ENCODE measurements at regions of chr2 and their contacts with region 1.

Region 1: DNA sequence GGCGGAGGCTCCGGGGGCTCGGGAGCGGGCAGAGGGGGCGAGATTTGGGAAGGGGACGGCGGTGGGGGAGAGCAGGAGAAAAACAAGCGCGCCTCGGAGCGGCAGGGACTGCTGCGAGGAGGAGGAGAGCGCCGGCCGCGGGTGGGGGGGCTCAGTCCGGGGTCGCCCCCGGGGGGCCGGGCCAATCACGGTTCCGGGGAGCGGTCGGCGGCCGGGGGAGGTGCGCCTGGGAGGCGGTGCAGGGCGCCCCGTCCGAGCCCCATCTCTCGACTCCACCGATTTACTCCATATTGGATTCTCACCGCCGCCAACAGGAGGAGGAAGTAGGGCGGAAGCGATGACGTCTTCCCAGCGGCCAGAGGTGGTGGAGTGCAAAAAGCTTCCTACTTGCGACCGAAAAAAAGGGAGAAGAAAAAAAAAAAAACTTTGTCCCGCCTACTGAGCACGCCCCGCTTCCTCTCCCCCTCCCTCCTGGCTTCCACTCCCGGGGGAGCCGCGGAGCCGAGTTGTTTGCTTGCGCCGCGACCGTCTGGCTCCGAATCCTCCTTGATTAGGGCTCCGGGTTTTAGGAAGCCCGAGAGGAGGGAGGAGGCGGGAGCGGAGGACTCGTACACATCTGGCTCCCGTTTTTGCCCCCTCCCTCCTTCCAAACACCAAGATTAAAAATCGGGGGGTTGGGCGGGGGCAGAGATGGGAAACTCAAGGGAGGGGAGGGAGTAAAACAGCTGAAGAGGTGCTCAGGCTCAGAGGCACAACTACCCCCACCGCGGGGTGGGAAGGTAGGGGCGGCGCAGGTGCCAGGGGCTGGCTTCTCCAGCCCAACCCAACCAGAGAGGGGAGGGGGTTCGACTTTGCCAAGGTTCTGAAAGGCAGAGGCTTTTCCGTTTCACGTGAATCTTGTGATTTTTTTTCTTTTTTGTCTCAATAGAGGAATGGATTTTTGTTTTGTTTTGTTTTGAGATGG is at the start of gene SPRED2:
- DNase-seq: peak; percentile 87
- ATAC-seq: peak; percentile 50
- H3K4me3 Mint-ChIP-seq: peak within 1 kb of the TSS; percentile 85
- H3K27ac Mint-ChIP-seq: peak within 1 kb of the TSS; percentile 73
- H3K4me1 Mint-ChIP-seq: peaks cover 16% of the 10 kb centered on the region
- H3K27me3 Mint-ChIP-seq: peaks cover 23% of the 10 kb centered on the region
- total RNA-seq, gene SPRED2: 6.7 to 7.9 TPM

Region 2: DNA sequence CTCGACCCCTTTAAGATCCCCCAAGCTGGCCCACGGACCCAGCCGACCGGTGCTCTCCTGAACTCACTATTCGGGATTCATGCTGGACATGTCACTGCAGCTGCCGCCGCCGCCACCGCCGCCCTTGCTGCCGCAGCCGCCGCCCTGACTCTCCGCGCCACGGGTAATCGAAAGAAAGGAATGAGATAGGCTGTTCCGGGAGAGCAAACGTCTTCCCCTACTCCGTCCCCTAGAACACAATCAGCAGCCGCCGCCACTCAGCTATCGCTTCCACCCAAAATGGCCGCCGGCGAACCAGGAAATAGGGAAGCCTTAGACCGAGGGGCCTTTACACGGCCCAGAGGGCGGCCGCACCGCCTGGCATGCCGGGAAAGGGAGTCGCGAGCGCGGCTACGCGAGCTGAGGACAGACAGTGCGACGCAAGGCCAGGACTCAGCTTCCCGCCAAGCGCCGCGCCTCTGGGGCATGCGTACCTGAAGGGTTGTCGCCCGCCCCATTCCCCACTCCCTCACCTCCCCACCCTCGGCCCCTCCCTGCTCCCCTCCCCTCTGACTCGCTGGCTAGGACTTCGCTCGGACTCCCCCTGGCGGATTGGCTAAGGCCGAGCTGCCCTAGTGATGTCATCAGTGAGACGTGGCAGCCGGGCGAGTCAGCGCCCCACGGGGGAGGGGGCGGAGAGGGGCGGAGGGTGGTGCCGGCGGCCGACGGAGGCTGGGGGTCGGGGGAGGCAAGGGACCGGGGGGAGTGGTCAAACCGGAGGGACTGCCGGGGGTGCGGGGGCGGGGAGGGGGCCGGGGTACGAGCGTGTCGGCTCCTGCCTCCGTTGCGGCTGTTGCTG is 302.5 kb before region 1 on chr2 and contains the start of gene RAB1A:
- CTCF ChIA-PET with region 1: no interaction called
- POLR2A ChIA-PET with region 1: interaction called, 3 read pairs
- intact Hi-C with region 1: loop called in 1 of 2 experiments (anchors 1 kb)
- DNase-seq: peak; percentile 100
- ATAC-seq: peak; percentile 95
- H3K4me3 Mint-ChIP-seq: peak within 1 kb of the TSS; percentile 100
- H3K27ac Mint-ChIP-seq: peak within 1 kb of the TSS; percentile 100
- H3K4me1 Mint-ChIP-seq: peaks cover 30% of the 10 kb centered on the region
- H3K27me3 Mint-ChIP-seq: no peaks in the 10 kb centered on the region
- total RNA-seq, gene RAB1A: 77.1 to 84.8 TPM

Region 3: GRCh38 chr2:65300761-65301711 is 131.5 kb before region 1 on chr2:
- CTCF ChIA-PET with region 1: interaction called, 4 read pairs
- POLR2A ChIA-PET with region 1: interaction called, 4 read pairs
- intact Hi-C with region 1: loop called (anchors 1 kb)
- DNase-seq: peak; percentile 90
- ATAC-seq: peak; percentile 92
- H3K4me3 Mint-ChIP-seq: peak overlapping the region; percentile 52
- H3K27ac Mint-ChIP-seq: peak overlapping the region; percentile 79
- H3K4me1 Mint-ChIP-seq: peaks cover 48% of the 10 kb centered on the region
- H3K27me3 Mint-ChIP-seq: peaks cover 13% of the 10 kb centered on the region

Region 4: DNA sequence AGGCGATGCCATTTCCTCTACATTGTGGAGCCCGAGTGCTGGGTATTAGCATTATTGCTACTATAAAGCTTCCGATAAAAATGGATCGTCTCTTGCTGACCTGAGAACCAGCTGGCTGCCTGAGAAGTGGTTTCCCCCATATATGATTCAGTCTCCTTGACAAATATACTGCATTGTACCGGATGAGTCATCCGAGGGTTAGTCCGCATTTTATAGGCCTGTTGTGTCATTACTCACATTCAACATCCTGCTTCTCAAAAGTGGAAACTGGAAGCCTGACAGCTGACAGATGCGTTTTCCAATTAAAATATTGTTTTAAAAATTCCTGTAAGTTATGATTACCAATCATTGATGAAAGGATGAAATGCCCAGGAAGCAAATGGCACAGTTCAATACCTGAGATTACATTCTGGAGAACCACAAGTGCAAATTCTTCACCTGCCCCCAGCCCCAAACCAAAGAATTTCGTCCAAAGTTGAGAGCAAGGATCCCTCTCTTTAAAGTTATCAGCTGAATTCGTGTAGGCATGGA is 65.8 kb before region 1 on chr2:
- CTCF ChIA-PET with region 1: interaction called, 3 read pairs
- POLR2A ChIA-PET with region 1: no interaction called
- intact Hi-C with region 1: loop called in 1 of 2 experiments (anchors 5 kb)
- DNase-seq: peak; percentile 63
- ATAC-seq: peak; percentile 97
- H3K4me3 Mint-ChIP-seq: no peak overlapping the region
- H3K27ac Mint-ChIP-seq: no peak overlapping the region
- H3K4me1 Mint-ChIP-seq: peaks cover 17% of the 10 kb centered on the region
- H3K27me3 Mint-ChIP-seq: peaks cover 2% of the 10 kb centered on the region

Region 5: DNA sequence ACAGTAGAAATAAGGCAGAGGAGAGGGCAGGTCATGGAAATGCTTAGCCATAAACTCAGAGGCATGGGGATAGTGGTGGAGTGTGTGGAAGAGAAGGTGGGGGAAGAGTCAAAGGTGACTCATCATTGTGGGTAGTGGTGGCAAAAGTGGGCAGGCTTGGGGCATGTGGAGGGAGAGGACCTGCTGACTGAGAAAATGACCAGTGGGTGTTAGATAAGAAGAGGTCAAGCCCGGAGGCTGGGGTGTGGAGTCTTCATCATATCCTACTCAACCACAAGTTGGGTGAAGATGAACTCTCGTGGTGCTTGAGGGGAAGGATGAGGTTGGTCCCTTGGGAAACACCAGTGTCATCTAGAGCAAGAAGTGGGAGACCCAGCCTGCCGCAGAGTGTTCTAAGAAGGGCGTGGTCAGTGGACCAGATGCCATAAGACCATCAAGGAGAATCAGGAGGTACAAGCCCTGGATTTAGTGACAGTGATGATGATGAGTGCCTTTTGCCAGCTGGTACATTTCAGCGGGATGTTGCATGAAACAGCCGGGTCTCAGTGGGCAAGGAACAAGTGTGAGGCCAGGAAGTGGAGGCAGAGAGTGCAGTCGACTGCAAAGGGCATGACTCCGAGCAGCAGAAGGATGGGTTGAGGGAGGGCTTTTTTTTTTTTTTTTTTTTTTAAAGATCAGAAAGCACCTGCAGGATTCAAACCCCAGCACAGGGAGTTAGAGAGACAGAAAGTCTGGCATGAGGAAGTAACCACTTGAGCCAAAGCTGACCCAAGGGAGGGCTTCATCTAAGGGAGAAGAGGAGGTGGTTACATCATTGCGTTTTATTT is 122.5 kb after region 1 on chr2:
- CTCF ChIA-PET with region 1: no interaction called
- POLR2A ChIA-PET with region 1: no interaction called
- intact Hi-C with region 1: loop called (anchors 2 to 5 kb)
- DNase-seq: peak; percentile 41
- ATAC-seq: peak; percentile 65
- H3K4me3 Mint-ChIP-seq: no peak overlapping the region
- H3K27ac Mint-ChIP-seq: peak overlapping the region; percentile 12
- H3K4me1 Mint-ChIP-seq: peaks cover 15% of the 10 kb centered on the region
- H3K27me3 Mint-ChIP-seq: peaks cover 8% of the 10 kb centered on the region